ENCODE measurements at regions of chr12 and their contacts with region 1.

Region 1: GRCh38 chr12:105420659-105421240 is 90.3 kb downstream of the C12orf75 start:
- DNase-seq: peak; percentile 84
- H3K4me3 Mint-ChIP-seq: no peak overlapping the region
- H3K27ac Mint-ChIP-seq: no peak overlapping the region
- H3K4me1 Mint-ChIP-seq: peaks cover 10% of the 10 kb centered on the region
- H3K27me3 Mint-ChIP-seq: no peaks in the 10 kb centered on the region

Region 2: DNA sequence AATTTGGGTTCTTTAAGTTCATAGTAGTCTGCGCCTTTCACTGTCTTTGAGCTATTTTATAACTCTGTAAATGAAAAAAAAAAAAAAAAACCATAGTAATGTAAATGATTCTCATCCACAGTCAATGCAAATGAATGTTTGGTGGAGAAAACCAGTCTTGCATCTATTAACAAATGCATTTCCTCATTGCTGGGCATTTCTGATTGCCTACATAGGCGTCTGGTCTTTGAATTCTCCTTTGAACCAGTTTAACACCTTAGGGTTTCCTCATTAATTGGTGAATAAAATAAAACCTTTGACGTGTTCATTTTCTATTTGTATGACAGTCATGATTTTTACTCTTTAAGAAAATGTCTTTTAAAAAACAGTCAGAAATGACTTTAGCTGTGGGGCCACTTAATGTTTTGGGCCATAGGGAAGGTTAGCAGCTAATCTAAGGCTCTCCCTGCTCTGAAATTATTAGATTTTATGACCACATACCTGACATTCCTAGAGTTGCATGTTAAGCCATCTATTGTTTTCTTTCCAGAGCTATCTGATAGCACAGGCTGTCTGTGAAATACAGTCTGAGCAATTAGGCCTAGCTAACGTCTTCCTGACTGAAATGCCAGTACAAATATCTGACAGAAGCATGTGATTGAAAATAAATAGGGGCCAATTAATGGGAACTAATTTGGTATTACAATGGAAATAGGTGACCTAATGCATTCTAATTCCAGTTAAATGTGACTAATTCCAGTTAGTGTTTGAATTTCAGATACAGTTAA is 24.7 kb after region 1 on chr12:
- CTCF ChIA-PET with region 1: no interaction called
- intact Hi-C with region 1: no loop called
- DNase-seq: no peak
- H3K4me3 Mint-ChIP-seq: no peak overlapping the region
- H3K27ac Mint-ChIP-seq: no peak overlapping the region
- H3K4me1 Mint-ChIP-seq: no peaks in the 10 kb centered on the region
- H3K27me3 Mint-ChIP-seq: peaks cover 14% of the 10 kb centered on the region

Region 3: GRCh38 chr12:106149096-106149784 is 728.5 kb after region 1 on chr12:
- CTCF ChIA-PET with region 1: interaction called, 11 read pairs
- intact Hi-C with region 1: no loop called
- DNase-seq: peak; percentile 18
- H3K4me3 Mint-ChIP-seq: no peak overlapping the region
- H3K27ac Mint-ChIP-seq: no peak overlapping the region
- H3K4me1 Mint-ChIP-seq: no peaks in the 10 kb centered on the region
- H3K27me3 Mint-ChIP-seq: peaks cover 24% of the 10 kb centered on the region

Region 4: GRCh38 chr12:106282457-106283097 is 861.8 kb after region 1 on chr12:
- CTCF ChIA-PET with region 1: no interaction called
- intact Hi-C with region 1: loop called (anchors 5 kb)
- DNase-seq: peak; percentile 69
- H3K4me3 Mint-ChIP-seq: no peak overlapping the region
- H3K27ac Mint-ChIP-seq: no peak overlapping the region
- H3K4me1 Mint-ChIP-seq: peaks cover 14% of the 10 kb centered on the region
- H3K27me3 Mint-ChIP-seq: peaks cover 4% of the 10 kb centered on the region